BJ (cell line): ENCODE measurements at regions of chr14 and their contacts with region 1.

Region 1: GRCh38 chr14:50249136-50249800 is 17.9 kb upstream of the SOS2 start:
- DNase-seq: no peak
- H3K4me3 ChIP-seq: no peak overlapping the region
- H3K27me3 ChIP-seq: no peaks in the 10 kb centered on the region
- CTCF ChIP-seq: no peak

Region 2: GRCh38 chr14:50260511-50260910 is 11.2 kb after region 1 on chr14:
- CTCF ChIA-PET with region 1: interaction called, 18 read pairs
- POLR2A ChIA-PET with region 1: no interaction called
- DNase-seq: no peak
- H3K4me3 ChIP-seq: no peak overlapping the region
- H3K27me3 ChIP-seq: no peaks in the 10 kb centered on the region
- CTCF ChIP-seq: peak; percentile 64

Region 3: DNA sequence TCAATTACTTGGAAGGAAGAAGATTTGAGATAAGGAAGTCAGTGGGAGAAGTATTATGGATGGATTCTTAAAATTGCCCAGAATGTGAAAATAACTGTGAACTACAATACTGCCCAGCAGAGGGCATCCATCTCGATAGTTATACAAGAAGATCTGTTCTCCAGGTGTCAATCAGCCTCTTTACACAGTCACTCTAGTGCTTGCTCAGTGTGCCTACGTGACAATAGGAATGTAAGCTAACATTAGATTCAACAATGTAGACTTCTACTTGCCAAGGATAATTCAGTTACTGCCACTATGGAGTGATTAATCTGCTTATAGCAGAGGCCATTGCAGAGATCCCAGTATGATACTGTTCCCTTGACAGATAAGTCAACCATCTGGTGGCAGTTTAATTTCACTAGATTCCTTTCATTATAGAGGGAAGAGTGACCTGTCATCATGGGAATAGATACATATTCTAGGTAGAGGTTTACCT is 293.7 kb after region 1 on chr14:
- CTCF ChIA-PET with region 1: no interaction called
- POLR2A ChIA-PET with region 1: no interaction called
- DNase-seq: no peak
- H3K4me3 ChIP-seq: no peak overlapping the region
- H3K27me3 ChIP-seq: peaks cover 2% of the 10 kb centered on the region
- CTCF ChIP-seq: peak; percentile 54